Common myeloid progenitor, CD34-positive (primary cell): ENCODE measurements at regions of chr11 and their contacts with region 1.

Region 1: GRCh38 chr11:126214841-126215240 is 3.3 kb downstream of the FAM118B start:
- DNase-seq: no peak
- H3K4me3 ChIP-seq: no peak overlapping the region
- H3K27ac ChIP-seq: no peak overlapping the region
- H3K4me1 ChIP-seq: peaks cover 20 to 73% (median 40%) of the 10 kb centered on the region in 4 experiments
- H3K27me3 ChIP-seq: no peaks in the 10 kb centered on the region

Region 2: GRCh38 chr11:125423247-125423849 is 791.5 kb before region 1 on chr11:
- CTCF ChIA-PET with region 1: no interaction called
- POLR2A ChIA-PET with region 1: interaction called, 14 read pairs
- DNase-seq: no peak
- H3K4me3 ChIP-seq: no peak overlapping the region
- H3K27ac ChIP-seq: no peak overlapping the region
- H3K4me1 ChIP-seq: no peaks in the 10 kb centered on the region
- H3K27me3 ChIP-seq: peaks cover 0 to 21% (median 15%) of the 10 kb centered on the region in 5 experiments

Region 3: GRCh38 chr11:126366065-126366785 is 151.4 kb after region 1 on chr11:
- CTCF ChIA-PET with region 1: no interaction called
- POLR2A ChIA-PET with region 1: no interaction called
- DNase-seq: peak in 2 of 3 donors; percentile 31 to 53
- H3K4me3 ChIP-seq: peak overlapping the region in 1 of 7 experiments; percentile 50
- H3K27ac ChIP-seq: no peak overlapping the region
- H3K4me1 ChIP-seq: peaks cover 10 to 75% (median 52%) of the 10 kb centered on the region in 4 experiments
- H3K27me3 ChIP-seq: no peaks in the 10 kb centered on the region